Ovary (tissue), 10 donors: ENCODE measurements at regions of chr4 and their contacts with region 1.

Region 1: DNA sequence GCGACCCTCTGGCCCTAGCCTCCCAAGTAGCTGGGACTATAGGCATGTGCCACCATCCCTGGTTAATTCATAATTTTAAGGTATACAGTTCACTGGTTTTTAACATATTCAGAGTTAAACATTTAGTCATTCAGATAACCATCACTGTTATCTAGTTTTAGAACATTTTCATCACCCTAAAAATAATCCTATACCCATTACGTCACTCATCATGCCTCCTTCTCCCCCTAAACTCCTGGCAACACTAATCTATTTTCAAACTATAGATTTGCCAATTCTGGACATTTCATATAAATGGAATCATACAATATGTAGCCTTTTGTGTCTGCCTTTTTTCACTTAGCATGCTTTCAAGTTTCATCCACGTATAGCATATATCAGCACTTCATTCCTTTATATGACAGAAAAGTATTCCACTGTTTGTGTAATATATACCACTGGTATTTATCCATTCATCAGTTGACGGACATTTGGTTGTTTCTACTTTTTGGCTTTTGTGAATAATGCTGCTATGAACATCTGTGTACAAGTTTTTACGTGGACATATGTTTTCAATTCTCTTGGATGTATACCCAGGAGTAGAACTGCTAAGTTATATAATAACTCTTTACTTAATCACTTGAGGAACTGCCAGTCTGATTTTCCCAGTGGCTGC is 32.0 kb upstream of the RPS3A start:
- DNase-seq: no peak
- H3K4me3 ChIP-seq: no peak overlapping the region
- H3K27ac ChIP-seq: no peak overlapping the region
- H3K4me1 ChIP-seq: no peaks in the 10 kb centered on the region
- H3K27me3 ChIP-seq: no peaks in the 10 kb centered on the region
- CTCF ChIP-seq: no peak
- EP300 ChIP-seq: no peak
- POLR2A ChIP-seq: no peak

Region 2: DNA sequence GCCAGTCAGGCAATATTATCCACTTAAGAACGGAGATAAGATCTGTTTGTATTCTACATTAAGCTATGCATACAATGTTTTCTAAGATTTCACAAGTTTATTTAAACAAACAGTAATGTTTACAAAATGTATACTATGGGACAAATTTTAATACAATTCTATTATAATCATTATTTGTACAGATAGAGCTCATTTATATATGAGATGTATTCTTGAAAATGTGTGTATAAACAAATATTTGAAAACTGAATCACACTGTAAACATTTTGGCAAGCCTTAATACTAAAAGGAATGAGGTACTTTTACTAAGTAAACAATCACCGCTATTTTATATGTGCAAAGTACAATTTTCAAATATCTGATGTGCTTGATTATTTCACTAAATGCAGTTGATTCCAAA is 604.7 kb before region 1 on chr4:
- intact Hi-C with region 1: no loop called
- DNase-seq: no peak
- H3K4me3 ChIP-seq: no peak overlapping the region
- H3K27ac ChIP-seq: no peak overlapping the region
- H3K4me1 ChIP-seq: no peaks in the 10 kb centered on the region
- H3K27me3 ChIP-seq: no peaks in the 10 kb centered on the region
- CTCF ChIP-seq: no peak
- EP300 ChIP-seq: no peak
- POLR2A ChIP-seq: no peak

Region 3: DNA sequence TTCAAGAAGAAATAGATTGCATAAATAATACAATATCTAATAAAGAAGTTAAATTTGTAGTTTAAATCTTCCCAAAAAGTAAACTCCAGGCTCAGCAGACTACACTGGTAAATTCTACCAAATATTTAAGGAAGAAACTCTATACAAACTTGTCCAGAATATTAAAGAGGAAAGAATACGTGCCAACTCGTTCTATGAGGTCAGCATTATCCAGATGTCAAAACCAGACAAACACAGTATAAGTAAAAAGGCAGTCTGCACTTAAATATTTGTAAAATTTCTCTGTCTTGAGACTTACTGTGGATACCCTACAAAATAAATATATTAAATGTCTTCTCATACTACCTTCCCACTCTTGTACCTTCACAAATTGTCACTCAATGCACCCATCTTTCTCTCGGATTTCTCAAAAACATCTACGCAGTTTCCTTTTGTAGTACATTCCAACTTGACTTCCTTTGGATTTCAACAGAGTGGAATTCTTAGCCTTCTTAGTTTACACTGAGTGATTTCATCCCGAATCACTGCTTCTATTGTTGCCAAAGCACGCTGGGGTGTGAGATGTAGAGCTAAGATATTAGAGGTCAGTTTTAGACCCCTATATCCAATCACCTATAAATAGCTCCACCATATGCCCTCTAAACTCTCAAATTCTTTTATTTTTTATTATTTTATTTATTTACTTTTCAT is 557.1 kb before region 1 on chr4:
- intact Hi-C with region 1: no loop called
- DNase-seq: no peak
- H3K4me3 ChIP-seq: no peak overlapping the region
- H3K27ac ChIP-seq: no peak overlapping the region
- H3K4me1 ChIP-seq: no peaks in the 10 kb centered on the region
- H3K27me3 ChIP-seq: no peaks in the 10 kb centered on the region
- CTCF ChIP-seq: no peak
- EP300 ChIP-seq: no peak
- POLR2A ChIP-seq: no peak

Region 4: GRCh38 chr4:151045907-151046306 is 21.5 kb before region 1 on chr4:
- intact Hi-C with region 1: loop called in 1 of 4 experiments (anchors 1 kb)
- DNase-seq: no peak
- H3K4me3 ChIP-seq: no peak overlapping the region
- H3K27ac ChIP-seq: no peak overlapping the region
- H3K4me1 ChIP-seq: no peaks in the 10 kb centered on the region
- H3K27me3 ChIP-seq: no peaks in the 10 kb centered on the region
- CTCF ChIP-seq: no peak
- EP300 ChIP-seq: no peak
- POLR2A ChIP-seq: no peak